ENCODE measurements at regions of chr4 and their contacts with region 1.

Region 1: GRCh38 chr4:185039508-185040273 is 21.4 kb downstream of the HELT start:
- DNase-seq: peak in 3 of 6 donors; percentile 31 to 70 (median 45)
- ATAC-seq: peak; percentile 69 to 97 (median 94)
- H3K4me3 ChIP-seq: peak overlapping the region in 1 of 4 donors; percentile 15
- H3K27ac ChIP-seq: no peak overlapping the region
- H3K4me1 ChIP-seq: no peaks in the 10 kb centered on the region
- H3K27me3 ChIP-seq: no peaks in the 10 kb centered on the region
- CTCF ChIP-seq: peak; percentile 42 to 61 (median 54)

Region 2: GRCh38 chr4:184825896-184826690 is 213.6 kb before region 1 on chr4 and contains the start of gene ACSL1:
- intact Hi-C with region 1: no loop called
- DNase-seq: peak; percentile 67 to 91 (median 83)
- ATAC-seq: peak; percentile 90 to 95 (median 92)
- H3K4me3 ChIP-seq: peak within 1 kb of the TSS; percentile 57 to 72 (median 64)
- H3K27ac ChIP-seq: peak within 1 kb of the TSS; percentile 33 to 81 (median 58)
- H3K4me1 ChIP-seq: peaks cover 0 to 5% (median 3%) of the 10 kb centered on the region in 3 donors
- H3K27me3 ChIP-seq: no peaks in the 10 kb centered on the region
- CTCF ChIP-seq: no peak
- total RNA-seq, gene ACSL1: 16.0 to 39.4 (median 20.9) TPM

Region 3: GRCh38 chr4:185096032-185096653 is 56.5 kb after region 1 on chr4:
- intact Hi-C with region 1: loop called in 1 of 3 experiments (anchors 10 kb)
- DNase-seq: peak in 3 of 6 donors; percentile 40 to 50 (median 48)
- ATAC-seq: peak; percentile 48 to 84 (median 78)
- H3K4me3 ChIP-seq: no peak overlapping the region
- H3K27ac ChIP-seq: no peak overlapping the region
- H3K4me1 ChIP-seq: peaks cover 0 to 4% (median 0%) of the 10 kb centered on the region in 3 donors
- H3K27me3 ChIP-seq: no peaks in the 10 kb centered on the region
- CTCF ChIP-seq: peak; percentile 17 to 51 (median 38)

Region 4: DNA sequence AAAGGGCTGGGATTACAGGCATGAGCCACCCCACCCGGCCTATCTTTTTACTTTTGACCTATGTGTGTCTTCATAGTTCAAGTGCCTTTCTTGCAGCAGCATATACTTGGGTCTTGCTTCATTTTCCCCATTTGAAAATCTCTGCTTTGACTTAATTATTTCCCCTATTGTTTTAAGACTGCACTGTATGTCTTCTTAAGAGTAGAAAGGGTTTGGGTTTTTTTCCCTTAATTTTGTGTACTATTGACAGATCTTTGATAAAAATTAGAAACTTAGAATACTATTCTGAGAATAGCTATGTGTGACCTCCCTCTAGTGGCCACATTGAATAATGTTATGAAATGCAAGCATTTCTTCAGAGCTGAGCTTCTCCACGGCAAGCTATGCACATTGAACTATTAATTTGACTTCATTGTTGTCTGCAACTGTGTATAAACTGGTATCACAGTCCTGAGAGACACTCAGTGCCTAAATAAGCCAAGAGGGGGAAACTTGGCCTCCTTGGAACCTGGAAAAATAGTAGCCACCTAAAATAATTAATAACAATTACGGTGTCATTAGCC is 94.7 kb after region 1 on chr4:
- intact Hi-C with region 1: loop called in 2 of 3 experiments (anchors 2 to 5 kb)
- DNase-seq: no peak
- ATAC-seq: peak; percentile 74 to 96 (median 91)
- H3K4me3 ChIP-seq: no peak overlapping the region
- H3K27ac ChIP-seq: no peak overlapping the region
- H3K4me1 ChIP-seq: no peaks in the 10 kb centered on the region
- H3K27me3 ChIP-seq: no peaks in the 10 kb centered on the region
- CTCF ChIP-seq: peak; percentile 53 to 76 (median 60)